B cell (primary cell): ENCODE measurements at regions of chr1 and their contacts with region 1.

Region 1: GRCh38 chr1:51878616-51879336 is at the start of gene NRDC:
- DNase-seq: peak; percentile 100
- ATAC-seq: peak; percentile 89
- H3K4me3 ChIP-seq: peak within 1 kb of the TSS; percentile 65 to 99 (median 95)
- H3K4me3 Mint-ChIP-seq: no peak within 1 kb of the TSS
- H3K27ac ChIP-seq: peak within 1 kb of the TSS; percentile 84 to 98
- H3K27ac Mint-ChIP-seq: no peak within 1 kb of the TSS
- H3K4me1 ChIP-seq: peaks cover 25 to 42% of the 10 kb centered on the region in 2 donors
- H3K4me1 Mint-ChIP-seq: peaks cover 31% of the 10 kb centered on the region
- H3K27me3 ChIP-seq: no peaks in the 10 kb centered on the region
- H3K27me3 Mint-ChIP-seq: peaks cover 4% of the 10 kb centered on the region
- CTCF ChIP-seq: no peak
- total RNA-seq, gene NRDC: 154 and 167 TPM in 2 replicates

Region 2: DNA sequence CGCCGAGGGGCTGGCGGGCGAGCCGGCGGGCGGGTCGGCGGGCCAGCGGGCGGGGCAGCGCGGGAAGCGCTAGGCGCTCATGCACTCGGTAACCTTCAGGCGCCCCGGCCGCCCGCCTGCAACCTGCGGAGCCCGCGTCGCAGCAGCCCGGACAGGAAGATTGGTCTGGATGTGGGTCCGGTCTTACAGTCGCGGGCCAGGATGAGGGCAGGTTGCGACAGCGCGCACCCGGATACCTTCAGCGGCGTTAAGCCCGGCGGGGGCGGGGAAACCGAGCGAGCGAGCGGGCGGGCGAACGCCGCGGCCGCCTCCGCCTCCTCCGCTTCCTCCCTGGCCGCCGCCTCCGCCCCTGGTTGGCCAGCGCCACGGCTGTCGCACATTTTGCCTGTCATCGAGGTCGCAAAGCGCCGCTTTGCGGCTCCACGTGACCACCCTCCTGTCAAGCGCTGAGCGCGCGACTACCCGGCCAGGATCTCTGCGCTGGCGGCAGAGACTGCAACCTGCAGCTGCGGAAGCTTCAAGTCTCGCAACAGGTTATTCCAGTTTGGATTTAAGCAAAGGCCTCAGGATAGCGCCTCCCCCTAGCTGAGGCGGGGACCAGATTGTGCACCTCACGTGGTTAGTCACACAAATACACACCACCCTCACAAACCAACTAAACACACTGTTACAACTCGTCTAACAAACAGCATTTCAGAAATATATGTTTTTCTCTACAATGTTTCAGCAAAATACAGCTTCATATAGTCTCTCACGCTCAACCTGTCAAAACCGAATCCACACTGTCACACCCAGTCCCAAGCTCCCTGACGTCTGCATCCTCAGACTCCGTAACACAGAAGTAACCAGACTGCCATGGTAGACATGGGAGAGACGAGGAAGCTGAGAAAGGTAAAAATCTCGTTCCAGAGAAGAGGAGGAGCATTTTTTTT is 918.6 kb before region 1 on chr1 and contains the start of gene FAF1:
- CTCF ChIA-PET with region 1: no interaction called
- POLR2A ChIA-PET with region 1: no interaction called
- intact Hi-C with region 1: loop called (anchors 1 kb)
- DNase-seq: peak; percentile 99
- ATAC-seq: peak; percentile 92
- H3K4me3 ChIP-seq: peak within 1 kb of the TSS; percentile 69 to 94 (median 78)
- H3K4me3 Mint-ChIP-seq: peak within 1 kb of the TSS; percentile 94
- H3K27ac ChIP-seq: peak within 1 kb of the TSS; percentile 67 to 76
- H3K27ac Mint-ChIP-seq: peak within 1 kb of the TSS; percentile 99
- H3K4me1 ChIP-seq: peaks cover 18 to 19% of the 10 kb centered on the region in 2 donors
- H3K4me1 Mint-ChIP-seq: peaks cover 24% of the 10 kb centered on the region
- H3K27me3 ChIP-seq: no peaks in the 10 kb centered on the region
- H3K27me3 Mint-ChIP-seq: no peaks in the 10 kb centered on the region
- CTCF ChIP-seq: peak; percentile 24
- total RNA-seq, gene FAF1: 58.4 and 61.1 TPM in 2 replicates

Region 3: GRCh38 chr1:51235673-51236530 is 642.9 kb before region 1 on chr1 and contains the start of gene RNF11:
- CTCF ChIA-PET with region 1: no interaction called
- POLR2A ChIA-PET with region 1: no interaction called
- intact Hi-C with region 1: loop called (anchors 10 kb)
- DNase-seq: peak; percentile 95
- ATAC-seq: peak; percentile 73
- H3K4me3 ChIP-seq: peak within 1 kb of the TSS; percentile 69 to 96 (median 86)
- H3K4me3 Mint-ChIP-seq: peak within 1 kb of the TSS; percentile 94
- H3K27ac ChIP-seq: peak within 1 kb of the TSS; percentile 58 to 80
- H3K27ac Mint-ChIP-seq: peak within 1 kb of the TSS; percentile 94
- H3K4me1 ChIP-seq: peaks cover 29 to 39% of the 10 kb centered on the region in 2 donors
- H3K4me1 Mint-ChIP-seq: peaks cover 34% of the 10 kb centered on the region
- H3K27me3 ChIP-seq: peaks cover 0 to 6% (median 1%) of the 10 kb centered on the region in 4 experiments
- H3K27me3 Mint-ChIP-seq: peaks cover 8% of the 10 kb centered on the region
- CTCF ChIP-seq: no peak
- total RNA-seq, gene RNF11: 17.6 and 20.6 TPM in 2 replicates

Region 4: DNA sequence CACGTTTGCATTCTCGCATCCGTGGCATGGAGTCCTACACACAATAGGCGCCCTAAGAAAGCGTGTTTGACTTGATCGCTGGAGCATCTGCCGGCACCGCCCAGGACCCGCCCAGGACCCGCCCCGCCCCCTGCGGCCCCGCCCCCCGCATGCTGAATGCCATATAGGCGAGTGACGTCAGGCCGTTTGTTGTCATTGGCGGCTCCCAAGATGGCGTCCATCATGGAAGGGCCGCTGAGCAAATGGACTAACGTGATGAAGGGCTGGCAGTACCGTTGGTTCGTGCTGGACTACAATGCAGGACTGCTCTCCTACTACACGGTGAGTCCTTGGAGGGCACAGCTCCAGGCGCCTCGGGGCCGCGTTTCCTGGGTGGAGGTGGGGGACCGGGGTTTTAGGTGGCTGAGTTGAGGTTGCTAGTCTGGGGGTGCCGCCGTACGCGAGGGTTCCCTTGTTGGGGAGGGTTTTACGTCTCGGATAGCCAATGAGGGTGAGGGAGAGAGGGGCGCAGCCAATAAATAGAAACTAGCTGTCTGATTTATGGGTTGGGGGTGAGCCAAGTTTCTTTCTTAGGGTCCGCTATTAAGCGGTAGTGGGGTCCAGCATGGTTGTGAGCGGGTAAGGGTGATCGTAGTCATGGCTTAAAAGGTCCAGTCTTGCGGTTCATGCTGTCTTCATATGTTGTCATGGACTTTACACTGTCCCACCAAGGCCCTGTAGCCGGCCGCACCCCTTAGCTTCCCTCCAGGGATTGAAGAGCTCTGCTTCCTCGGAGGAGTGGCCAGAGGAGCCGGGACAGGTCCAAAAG is 261.7 kb before region 1 on chr1 and contains the start of gene OSBPL9:
- CTCF ChIA-PET with region 1: no interaction called
- POLR2A ChIA-PET with region 1: no interaction called
- intact Hi-C with region 1: loop called (anchors 1 kb)
- DNase-seq: peak; percentile 92
- ATAC-seq: peak; percentile 98
- H3K4me3 ChIP-seq: peak within 1 kb of the TSS; percentile 87 to 93 (median 90)
- H3K4me3 Mint-ChIP-seq: peak within 1 kb of the TSS; percentile 100
- H3K27ac ChIP-seq: peak within 1 kb of the TSS; percentile 65 to 85
- H3K27ac Mint-ChIP-seq: peak within 1 kb of the TSS; percentile 99
- H3K4me1 ChIP-seq: peaks cover 11 to 19% of the 10 kb centered on the region in 2 donors
- H3K4me1 Mint-ChIP-seq: peaks cover 32% of the 10 kb centered on the region
- H3K27me3 ChIP-seq: no peaks in the 10 kb centered on the region
- H3K27me3 Mint-ChIP-seq: no peaks in the 10 kb centered on the region
- CTCF ChIP-seq: no peak
- total RNA-seq, gene OSBPL9: 59.6 and 63.8 TPM in 2 replicates

Region 5: GRCh38 chr1:51729156-51729823 is 149.5 kb before region 1 on chr1:
- CTCF ChIA-PET with region 1: no interaction called
- POLR2A ChIA-PET with region 1: no interaction called
- intact Hi-C with region 1: loop called (anchors 1 kb)
- DNase-seq: peak; percentile 96
- ATAC-seq: peak; percentile 96
- H3K4me3 ChIP-seq: peak overlapping the region; percentile 72 to 98 (median 89)
- H3K4me3 Mint-ChIP-seq: peak overlapping the region; percentile 91
- H3K27ac ChIP-seq: peak overlapping the region; percentile 56 to 76
- H3K27ac Mint-ChIP-seq: peak overlapping the region; percentile 88
- H3K4me1 ChIP-seq: peaks cover 13 to 20% of the 10 kb centered on the region in 2 donors
- H3K4me1 Mint-ChIP-seq: peaks cover 41% of the 10 kb centered on the region
- H3K27me3 ChIP-seq: no peaks in the 10 kb centered on the region
- H3K27me3 Mint-ChIP-seq: no peaks in the 10 kb centered on the region
- CTCF ChIP-seq: no peak

Region 6: DNA sequence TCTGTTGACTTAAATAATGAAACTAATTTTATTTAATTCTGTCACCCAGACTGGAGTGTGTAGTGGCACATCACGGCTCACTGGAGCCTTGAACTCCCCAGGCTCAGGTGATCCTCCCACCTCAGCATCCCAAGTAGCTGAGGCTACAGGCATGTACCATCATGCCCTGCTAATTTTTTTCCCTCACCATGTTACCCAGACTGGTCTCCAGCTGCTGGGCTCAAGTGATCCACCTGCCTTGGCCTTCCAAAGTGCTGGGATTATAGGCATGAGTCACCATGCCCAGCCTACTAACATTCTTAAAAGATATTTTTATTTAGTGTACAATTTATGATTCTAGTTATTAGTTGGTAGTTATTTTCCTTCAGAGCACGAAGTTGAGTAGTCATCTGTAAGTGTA is 49.7 kb before region 1 on chr1:
- CTCF ChIA-PET with region 1: no interaction called
- POLR2A ChIA-PET with region 1: no interaction called
- intact Hi-C with region 1: loop called (anchors 10 kb)
- DNase-seq: no peak
- ATAC-seq: no peak
- H3K4me3 ChIP-seq: no peak overlapping the region
- H3K4me3 Mint-ChIP-seq: no peak overlapping the region
- H3K27ac ChIP-seq: no peak overlapping the region
- H3K27ac Mint-ChIP-seq: no peak overlapping the region
- H3K4me1 ChIP-seq: no peaks in the 10 kb centered on the region
- H3K4me1 Mint-ChIP-seq: no peaks in the 10 kb centered on the region
- H3K27me3 ChIP-seq: no peaks in the 10 kb centered on the region
- H3K27me3 Mint-ChIP-seq: no peaks in the 10 kb centered on the region
- CTCF ChIP-seq: no peak

Region 7: DNA sequence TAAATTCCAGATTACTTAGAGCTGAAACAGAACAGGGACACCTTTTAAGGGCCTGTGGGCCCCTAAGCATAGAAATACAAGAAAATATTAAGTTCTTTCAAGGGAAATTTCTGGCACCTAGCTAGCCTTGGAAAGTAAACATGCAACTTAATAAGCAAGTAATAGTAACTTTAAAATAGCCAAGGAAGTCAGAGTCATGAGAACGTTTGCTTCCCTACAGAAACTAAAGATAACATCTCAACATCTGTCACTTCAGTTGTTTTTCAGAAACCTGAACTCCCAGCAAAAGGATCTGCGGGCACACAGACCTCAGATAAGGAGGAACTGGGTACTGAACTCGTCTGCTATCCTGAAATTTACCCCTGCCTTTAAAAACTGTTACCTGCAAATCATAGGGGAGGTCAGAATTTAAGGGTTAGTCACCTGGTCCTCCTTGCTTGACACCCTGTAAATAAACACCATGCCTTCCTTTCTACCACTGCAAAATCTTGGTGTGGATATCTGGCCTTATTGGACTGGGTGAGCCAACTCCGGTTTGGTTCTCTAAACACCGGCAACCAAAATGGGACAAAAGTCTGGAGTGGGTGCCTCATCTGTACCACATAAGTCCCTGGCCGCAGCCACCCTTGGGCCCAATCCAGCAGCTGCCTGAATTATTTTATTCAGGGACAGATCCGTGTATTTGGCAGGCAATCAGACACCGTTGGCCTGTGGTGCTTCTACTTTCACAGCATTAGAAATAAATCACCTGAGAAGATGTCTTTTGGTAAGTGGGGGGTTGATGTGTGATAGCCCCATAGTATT is 28.2 kb before region 1 on chr1:
- CTCF ChIA-PET with region 1: no interaction called
- POLR2A ChIA-PET with region 1: no interaction called
- intact Hi-C with region 1: no loop called
- DNase-seq: no peak
- ATAC-seq: no peak
- H3K4me3 ChIP-seq: no peak overlapping the region
- H3K4me3 Mint-ChIP-seq: no peak overlapping the region
- H3K27ac ChIP-seq: no peak overlapping the region
- H3K27ac Mint-ChIP-seq: no peak overlapping the region
- H3K4me1 ChIP-seq: no peaks in the 10 kb centered on the region
- H3K4me1 Mint-ChIP-seq: no peaks in the 10 kb centered on the region
- H3K27me3 ChIP-seq: no peaks in the 10 kb centered on the region
- H3K27me3 Mint-ChIP-seq: no peaks in the 10 kb centered on the region
- CTCF ChIP-seq: no peak

Region 8: DNA sequence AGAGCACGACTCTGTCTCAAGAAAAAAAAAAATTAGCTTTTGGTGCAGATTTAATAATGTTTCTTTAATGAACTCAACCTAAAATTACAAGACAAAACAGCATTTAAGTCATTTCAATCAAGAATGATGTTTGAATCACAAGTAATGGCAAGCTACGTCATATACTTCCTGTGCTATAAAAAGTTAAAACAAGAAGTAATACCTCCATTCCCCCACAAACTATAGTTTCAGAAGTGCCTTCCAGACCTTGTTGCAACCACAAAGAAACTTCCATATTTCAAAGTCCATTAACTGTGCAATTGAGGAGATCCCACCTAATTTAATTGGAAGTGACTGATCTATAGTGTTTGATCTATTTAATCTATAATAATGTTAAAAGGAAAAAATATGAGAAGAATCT is 15.4 kb before region 1 on chr1:
- CTCF ChIA-PET with region 1: no interaction called
- POLR2A ChIA-PET with region 1: interaction called, 3 read pairs
- intact Hi-C with region 1: loop called (anchors 1 kb)
- DNase-seq: peak; percentile 72
- ATAC-seq: peak; percentile 70
- H3K4me3 ChIP-seq: no peak overlapping the region
- H3K4me3 Mint-ChIP-seq: peak overlapping the region; percentile 13
- H3K27ac ChIP-seq: peak overlapping the region; percentile 30 to 75
- H3K27ac Mint-ChIP-seq: peak overlapping the region; percentile 1
- H3K4me1 ChIP-seq: peaks cover 14 to 22% of the 10 kb centered on the region in 2 donors
- H3K4me1 Mint-ChIP-seq: peaks cover 42% of the 10 kb centered on the region
- H3K27me3 ChIP-seq: no peaks in the 10 kb centered on the region
- H3K27me3 Mint-ChIP-seq: no peaks in the 10 kb centered on the region
- CTCF ChIP-seq: no peak